ENCODE measurements at regions of chr16 and their contacts with region 1.

Region 1: GRCh38 chr16:53503270-53503923 is 388 bp upstream of the AKTIP start:
- DNase-seq: peak; percentile 100
- H3K4me3 ChIP-seq: peak overlapping the region; percentile 77 to 99 (median 84)
- H3K27ac ChIP-seq: peak overlapping the region; percentile 92 to 99 (median 96)
- H3K4me1 ChIP-seq: peaks cover 0 to 33% (median 28%) of the 10 kb centered on the region in 4 donors
- H3K27me3 ChIP-seq: no peaks in the 10 kb centered on the region
- CTCF ChIP-seq: no peak
- EP300 ChIP-seq: peak in 1 of 4 donors; percentile 6
- POLR2A ChIP-seq: peak; percentile 85 to 90

Region 2: DNA sequence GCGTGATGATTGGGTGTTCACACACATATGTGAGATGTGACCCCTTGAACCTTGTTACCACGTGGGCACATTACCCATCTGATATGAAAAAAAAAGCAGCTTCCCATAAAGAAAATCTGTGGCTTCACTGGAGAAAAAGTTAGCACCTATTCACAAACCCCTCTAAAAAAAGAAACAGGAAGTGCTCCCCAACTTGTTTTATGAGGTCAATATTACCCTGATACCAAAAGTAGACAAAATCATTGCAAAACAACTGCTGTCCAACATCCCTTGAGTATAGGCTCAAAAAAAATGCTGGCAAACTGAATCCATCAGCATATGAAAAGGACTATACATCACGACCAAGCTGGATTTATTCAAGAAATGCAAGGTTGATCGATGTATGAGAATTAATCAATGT is 168.8 kb before region 1 on chr16:
- intact Hi-C with region 1: no loop called
- DNase-seq: no peak
- H3K4me3 ChIP-seq: no peak overlapping the region
- H3K27ac ChIP-seq: no peak overlapping the region
- H3K4me1 ChIP-seq: no peaks in the 10 kb centered on the region
- H3K27me3 ChIP-seq: no peaks in the 10 kb centered on the region
- CTCF ChIP-seq: no peak
- EP300 ChIP-seq: no peak
- POLR2A ChIP-seq: no peak

Region 3: DNA sequence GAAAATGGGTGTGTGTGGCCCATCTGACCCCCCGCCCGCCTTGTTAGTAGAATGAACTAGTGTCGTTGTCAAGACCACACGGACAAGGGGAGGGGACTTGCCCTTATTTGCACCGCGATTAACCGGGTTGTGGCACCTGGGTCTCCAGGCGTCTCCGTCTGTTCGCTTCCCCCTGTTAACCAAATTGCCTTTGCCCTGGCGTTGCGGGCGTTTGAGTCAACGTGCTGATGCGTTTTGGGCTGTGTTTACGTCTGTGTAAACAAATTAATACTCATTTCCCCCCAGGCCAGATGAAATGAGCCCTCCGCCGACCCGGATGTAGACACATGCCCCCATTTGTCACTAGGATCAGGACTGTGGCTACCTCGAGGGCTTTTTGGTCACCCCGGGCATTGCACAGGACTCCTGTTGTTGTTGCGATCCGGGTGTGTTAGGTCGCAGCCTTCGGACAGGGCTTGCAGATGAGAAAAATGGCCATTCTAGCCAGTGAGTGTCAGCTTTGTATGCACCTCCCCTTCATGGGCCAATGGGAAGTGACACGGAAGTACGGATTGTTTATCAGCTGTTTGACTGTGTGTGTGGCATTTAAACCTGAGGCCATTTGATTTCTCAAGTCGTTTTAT is 68.2 kb before region 1 on chr16:
- intact Hi-C with region 1: loop called (anchors 2 kb)
- DNase-seq: peak; percentile 87
- H3K4me3 ChIP-seq: peak overlapping the region; percentile 82 to 97 (median 93)
- H3K27ac ChIP-seq: peak overlapping the region; percentile 95 to 97 (median 97)
- H3K4me1 ChIP-seq: peaks cover 0 to 28% (median 11%) of the 10 kb centered on the region in 4 donors
- H3K27me3 ChIP-seq: no peaks in the 10 kb centered on the region
- CTCF ChIP-seq: no peak
- EP300 ChIP-seq: no peak
- POLR2A ChIP-seq: peak in 1 of 2 donors; percentile 49

Region 4: DNA sequence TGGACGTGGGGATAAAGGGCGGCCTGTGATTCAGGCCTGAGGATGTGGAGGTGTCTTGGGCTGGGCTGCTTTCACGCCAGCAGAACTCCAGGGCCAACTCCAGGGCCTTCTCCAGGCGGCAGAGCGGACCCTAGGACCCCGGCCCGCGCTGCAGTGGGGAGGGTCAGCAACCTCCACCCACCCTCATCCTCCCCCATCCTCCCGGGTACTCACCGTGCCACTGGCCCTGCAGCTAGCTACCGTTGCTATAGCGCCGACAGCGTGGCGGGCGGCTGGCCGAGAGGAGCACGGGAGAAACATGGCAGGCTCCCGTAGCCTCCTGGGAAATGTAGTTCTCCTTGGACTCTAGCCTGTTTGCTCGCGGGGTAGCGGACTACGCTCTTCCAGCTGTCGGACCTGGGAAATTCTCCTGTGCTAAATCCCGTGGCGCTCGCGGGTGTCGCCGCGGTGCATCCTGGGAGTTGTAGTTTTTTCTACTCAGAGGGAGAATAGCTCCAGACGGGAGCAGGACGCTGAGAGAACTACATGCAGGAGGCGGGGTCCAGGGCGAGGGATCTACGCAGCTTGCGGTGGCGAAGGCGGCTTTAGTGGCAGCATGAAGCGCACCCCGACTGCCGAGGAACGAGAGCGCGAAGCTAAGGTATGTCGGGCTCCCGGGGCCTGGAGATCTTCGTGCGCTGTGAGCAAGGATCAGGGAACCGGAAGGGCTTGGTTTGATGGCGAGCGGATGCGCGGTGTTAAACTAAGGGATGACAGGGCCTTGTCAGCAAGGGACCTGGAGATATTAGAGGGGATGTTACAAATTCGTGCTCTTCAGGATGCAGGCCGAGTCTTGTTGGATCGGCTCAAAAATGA is 200.4 kb after region 1 on chr16 and contains the starts of genes FTO and RPGRIP1L:
- intact Hi-C with region 1: loop called (anchors 5 kb)
- DNase-seq: peak; percentile 99
- H3K4me3 ChIP-seq: peak within 1 kb of the TSS; percentile 49 to 81 (median 74)
- H3K27ac ChIP-seq: peak within 1 kb of the TSS; percentile 71 to 79 (median 73)
- H3K4me1 ChIP-seq: peaks cover 0 to 28% (median 14%) of the 10 kb centered on the region in 4 donors
- H3K27me3 ChIP-seq: no peaks in the 10 kb centered on the region
- CTCF ChIP-seq: no peak
- EP300 ChIP-seq: no peak
- POLR2A ChIP-seq: no peak
- total RNA-seq, gene FTO: 77.8 to 97.2 (median 86.0) TPM
- total RNA-seq, gene RPGRIP1L: 3.6 to 5.8 (median 3.8) TPM